Calu3 (cell line): ENCODE measurements at regions of chr3 and their contacts with region 1.

Region 1: GRCh38 chr3:169668957-169669681 is 5.6 kb upstream of the MECOM start:
- DNase-seq: peak; percentile 97
- H3K4me3 Mint-ChIP-seq: peak overlapping the region; percentile 79
- H3K27ac Mint-ChIP-seq: peak overlapping the region; percentile 60
- H3K4me1 Mint-ChIP-seq: peaks cover 30% of the 10 kb centered on the region
- H3K27me3 Mint-ChIP-seq: no peaks in the 10 kb centered on the region
- CTCF ChIP-seq: peak; percentile 95

Region 2: DNA sequence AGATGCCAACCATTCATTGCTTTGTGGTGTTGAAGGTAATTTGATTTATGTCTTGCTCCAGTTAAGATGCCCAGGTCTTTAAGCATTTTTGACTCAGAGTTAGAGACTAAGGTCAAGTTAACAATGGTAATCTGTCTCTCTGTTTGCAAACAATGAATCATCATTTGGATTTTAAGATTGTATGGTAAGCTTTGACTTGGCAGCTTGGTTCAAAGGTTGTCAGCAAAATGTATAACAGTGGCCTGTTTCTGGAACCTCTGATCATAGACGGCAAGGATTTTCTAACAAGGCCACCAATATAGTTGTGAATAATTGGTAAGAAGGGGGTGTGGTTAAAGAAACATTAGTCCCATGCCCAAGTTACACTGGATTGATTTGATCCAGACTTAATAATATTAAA is 798.2 kb before region 1 on chr3:
- CTCF ChIA-PET with region 1: no interaction called
- intact Hi-C with region 1: loop called (anchors 2 kb)
- DNase-seq: peak; percentile 41
- H3K4me3 Mint-ChIP-seq: peak overlapping the region; percentile 20
- H3K27ac Mint-ChIP-seq: peak overlapping the region; percentile 78
- H3K4me1 Mint-ChIP-seq: peaks cover 86% of the 10 kb centered on the region
- H3K27me3 Mint-ChIP-seq: no peaks in the 10 kb centered on the region
- CTCF ChIP-seq: no peak

Region 3: GRCh38 chr3:169133178-169134161 is 535.6 kb before region 1 on chr3:
- CTCF ChIA-PET with region 1: interaction called, 27 read pairs
- intact Hi-C with region 1: loop called (anchors 2 kb)
- DNase-seq: no peak
- H3K4me3 Mint-ChIP-seq: peak overlapping the region; percentile 33
- H3K27ac Mint-ChIP-seq: peak overlapping the region; percentile 75
- H3K4me1 Mint-ChIP-seq: peaks cover 75% of the 10 kb centered on the region
- H3K27me3 Mint-ChIP-seq: no peaks in the 10 kb centered on the region
- CTCF ChIP-seq: peak; percentile 63

Region 4: GRCh38 chr3:169218314-169218983 is 450.7 kb before region 1 on chr3:
- CTCF ChIA-PET with region 1: interaction called, 9 read pairs
- intact Hi-C with region 1: loop called (anchors 2 kb)
- DNase-seq: peak; percentile 80
- H3K4me3 Mint-ChIP-seq: no peak overlapping the region
- H3K27ac Mint-ChIP-seq: no peak overlapping the region
- H3K4me1 Mint-ChIP-seq: peaks cover 13% of the 10 kb centered on the region
- H3K27me3 Mint-ChIP-seq: no peaks in the 10 kb centered on the region
- CTCF ChIP-seq: peak; percentile 88

Region 5: GRCh38 chr3:169430707-169431404 is 238.3 kb before region 1 on chr3:
- CTCF ChIA-PET with region 1: no interaction called
- intact Hi-C with region 1: loop called (anchors 5 kb)
- DNase-seq: peak; percentile 72
- H3K4me3 Mint-ChIP-seq: peak overlapping the region; percentile 2
- H3K27ac Mint-ChIP-seq: peak overlapping the region; percentile 73
- H3K4me1 Mint-ChIP-seq: peaks cover 44% of the 10 kb centered on the region
- H3K27me3 Mint-ChIP-seq: no peaks in the 10 kb centered on the region
- CTCF ChIP-seq: no peak

Region 6: GRCh38 chr3:169619793-169620192 is 49.3 kb before region 1 on chr3:
- CTCF ChIA-PET with region 1: no interaction called
- intact Hi-C with region 1: no loop called
- DNase-seq: no peak
- H3K4me3 Mint-ChIP-seq: no peak overlapping the region
- H3K27ac Mint-ChIP-seq: no peak overlapping the region
- H3K4me1 Mint-ChIP-seq: peaks cover 12% of the 10 kb centered on the region
- H3K27me3 Mint-ChIP-seq: no peaks in the 10 kb centered on the region
- CTCF ChIP-seq: no peak

Region 7: GRCh38 chr3:169699536-169700050 is 30.5 kb after region 1 on chr3:
- CTCF ChIA-PET with region 1: no interaction called
- intact Hi-C with region 1: no loop called
- DNase-seq: no peak
- H3K4me3 Mint-ChIP-seq: no peak overlapping the region
- H3K27ac Mint-ChIP-seq: no peak overlapping the region
- H3K4me1 Mint-ChIP-seq: no peaks in the 10 kb centered on the region
- H3K27me3 Mint-ChIP-seq: peaks cover 69% of the 10 kb centered on the region
- CTCF ChIP-seq: no peak